Left ventricle myocardium inferior (tissue), 1 donor: ENCODE measurements at regions of chr10 and their contacts with region 1.

Region 1: GRCh38 chr10:22436884-22437619 is 91.8 kb downstream of the SPAG6 start:
- DNase-seq: peak; percentile 94
- H3K4me3 ChIP-seq: peak overlapping the region; percentile 87
- H3K27ac ChIP-seq: peak overlapping the region; percentile 98
- H3K4me1 ChIP-seq: peaks cover 33% of the 10 kb centered on the region
- H3K27me3 ChIP-seq: peaks cover 4% of the 10 kb centered on the region
- CTCF ChIP-seq: no peak

Region 2: DNA sequence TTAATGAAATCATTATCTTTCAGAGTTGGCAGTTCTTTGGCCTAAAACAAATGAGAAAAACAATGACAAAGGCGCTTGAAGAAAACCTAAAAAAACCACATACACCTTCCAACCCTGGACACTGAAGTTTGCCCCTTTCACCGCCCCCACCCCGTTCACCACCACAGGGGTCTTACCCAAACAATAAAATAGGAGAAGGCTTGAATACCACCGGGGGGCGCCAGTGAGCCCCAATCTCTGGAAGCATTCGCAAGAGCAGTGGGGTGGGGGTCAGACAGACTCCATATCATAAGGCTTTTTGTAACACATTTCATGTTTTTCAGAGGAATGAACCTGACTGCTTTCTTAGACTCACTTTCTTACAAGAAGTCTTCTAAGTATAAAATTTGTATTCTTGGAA is 113.7 kb after region 1 on chr10:
- intact Hi-C with region 1: loop called (anchors 10 kb)
- DNase-seq: peak; percentile 44
- H3K4me3 ChIP-seq: no peak overlapping the region
- H3K27ac ChIP-seq: no peak overlapping the region
- H3K4me1 ChIP-seq: peaks cover 32% of the 10 kb centered on the region
- H3K27me3 ChIP-seq: no peaks in the 10 kb centered on the region
- CTCF ChIP-seq: peak; percentile 62